ENCODE measurements at regions of chr6 and their contacts with region 1.

Region 1: GRCh38 chr6:152301764-152302568 is 335.2 kb downstream of the SYNE1 start:
- DNase-seq: peak; percentile 95
- ATAC-seq: peak; percentile 92
- H3K4me3 Mint-ChIP-seq: peak overlapping the region; percentile 92
- H3K27ac Mint-ChIP-seq: peak overlapping the region; percentile 99
- H3K4me1 Mint-ChIP-seq: peaks cover 31% of the 10 kb centered on the region
- H3K27me3 Mint-ChIP-seq: no peaks in the 10 kb centered on the region

Region 2: DNA sequence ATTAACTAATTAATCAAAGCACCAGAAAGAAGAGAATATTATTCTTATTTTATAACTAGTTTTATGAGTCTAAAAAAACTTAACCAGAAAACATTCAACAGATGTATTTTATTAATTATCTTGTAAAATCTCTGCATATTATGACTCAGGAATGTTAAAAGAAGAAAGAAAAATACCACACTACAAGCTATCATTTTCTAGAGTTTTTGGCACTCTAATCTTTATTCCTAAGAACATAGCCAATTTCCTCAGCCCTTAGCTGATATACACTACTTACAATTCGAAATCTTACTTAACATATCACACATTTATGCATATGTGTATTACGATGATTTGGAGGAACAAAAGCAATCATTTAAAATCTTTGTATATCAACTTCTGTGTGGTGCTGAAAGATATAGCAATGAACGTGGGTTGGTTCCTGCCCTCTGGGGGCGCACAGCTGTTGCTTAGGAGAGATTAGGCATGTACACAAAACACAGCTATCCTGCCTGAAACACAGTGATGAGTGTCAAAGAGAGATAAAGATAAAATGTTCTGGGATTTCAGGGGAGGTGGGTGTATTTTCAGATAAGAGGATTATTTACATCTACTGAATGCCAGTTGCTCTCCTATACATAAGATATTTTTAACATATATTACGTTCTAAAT is 69.3 kb before region 1 on chr6:
- CTCF ChIA-PET with region 1: no interaction called
- POLR2A ChIA-PET with region 1: no interaction called
- intact Hi-C with region 1: loop called in 1 of 2 experiments (anchors 5 kb)
- DNase-seq: peak; percentile 57
- ATAC-seq: peak; percentile 69
- H3K4me3 Mint-ChIP-seq: peak overlapping the region; percentile 66
- H3K27ac Mint-ChIP-seq: peak overlapping the region; percentile 80
- H3K4me1 Mint-ChIP-seq: peaks cover 26% of the 10 kb centered on the region
- H3K27me3 Mint-ChIP-seq: no peaks in the 10 kb centered on the region

Region 3: GRCh38 chr6:153002607-153003365 is 700.8 kb after region 1 on chr6 and contains the start of gene MTRF1L:
- CTCF ChIA-PET with region 1: no interaction called
- POLR2A ChIA-PET with region 1: no interaction called
- intact Hi-C with region 1: loop called in 1 of 2 experiments (anchors 2 kb)
- DNase-seq: peak; percentile 95
- ATAC-seq: peak; percentile 87
- H3K4me3 Mint-ChIP-seq: peak within 1 kb of the TSS; percentile 92
- H3K27ac Mint-ChIP-seq: peak within 1 kb of the TSS; percentile 99
- H3K4me1 Mint-ChIP-seq: peaks cover 36% of the 10 kb centered on the region
- H3K27me3 Mint-ChIP-seq: no peaks in the 10 kb centered on the region
- total RNA-seq, gene MTRF1L: 16.8 to 19.9 TPM